ENCODE measurements at regions of chr20 and their contacts with region 1.

Region 1: DNA sequence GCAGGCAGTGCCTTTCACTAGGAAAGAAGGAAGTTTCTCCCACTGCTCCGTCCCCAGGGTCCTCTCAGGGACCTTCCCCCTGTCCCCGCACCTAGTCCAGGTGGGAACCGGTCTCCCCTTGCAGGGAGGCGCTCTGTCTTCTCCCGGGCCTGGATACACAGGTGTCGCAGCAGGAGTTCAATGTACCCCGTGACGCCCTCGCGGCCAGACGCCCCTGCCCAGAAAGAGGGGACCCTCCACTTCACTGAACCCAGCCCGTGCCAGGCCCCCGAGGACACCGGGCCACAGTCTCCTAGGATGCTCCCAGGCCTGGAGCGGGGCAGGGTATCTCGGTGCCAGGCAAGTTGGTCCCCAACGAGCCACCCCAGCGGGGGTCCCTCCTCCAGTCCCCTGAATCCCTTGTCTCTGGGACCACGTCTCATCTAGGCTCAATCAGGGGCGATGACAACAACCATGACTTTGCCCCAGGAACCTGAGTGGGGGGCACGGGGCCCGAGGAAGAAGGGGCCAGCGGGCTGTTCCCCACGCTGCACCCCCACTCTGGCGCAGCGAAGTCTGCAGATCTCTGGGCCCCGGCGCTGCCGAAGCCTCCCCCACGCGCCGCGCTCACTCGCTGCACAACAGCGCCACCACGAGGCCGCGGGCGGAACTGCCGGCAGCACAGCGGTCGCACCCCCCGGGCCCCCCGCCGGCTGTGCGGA is 103.0 kb downstream of the EDN3 start:
- DNase-seq: peak; percentile 89
- ATAC-seq: peak; percentile 72
- H3K4me3 Mint-ChIP-seq: no peak overlapping the region
- H3K27ac Mint-ChIP-seq: peak overlapping the region; percentile 71
- H3K4me1 Mint-ChIP-seq: no peaks in the 10 kb centered on the region
- H3K27me3 Mint-ChIP-seq: peaks cover 2% of the 10 kb centered on the region

Region 2: GRCh38 chr20:58634521-58635278 is 768.7 kb before region 1 on chr20:
- CTCF ChIA-PET with region 1: no interaction called
- POLR2A ChIA-PET with region 1: no interaction called
- intact Hi-C with region 1: no loop called
- DNase-seq: peak; percentile 76
- ATAC-seq: peak; percentile 89
- H3K4me3 Mint-ChIP-seq: peak overlapping the region; percentile 31
- H3K27ac Mint-ChIP-seq: peak overlapping the region; percentile 86
- H3K4me1 Mint-ChIP-seq: peaks cover 17% of the 10 kb centered on the region
- H3K27me3 Mint-ChIP-seq: no peaks in the 10 kb centered on the region

Region 3: DNA sequence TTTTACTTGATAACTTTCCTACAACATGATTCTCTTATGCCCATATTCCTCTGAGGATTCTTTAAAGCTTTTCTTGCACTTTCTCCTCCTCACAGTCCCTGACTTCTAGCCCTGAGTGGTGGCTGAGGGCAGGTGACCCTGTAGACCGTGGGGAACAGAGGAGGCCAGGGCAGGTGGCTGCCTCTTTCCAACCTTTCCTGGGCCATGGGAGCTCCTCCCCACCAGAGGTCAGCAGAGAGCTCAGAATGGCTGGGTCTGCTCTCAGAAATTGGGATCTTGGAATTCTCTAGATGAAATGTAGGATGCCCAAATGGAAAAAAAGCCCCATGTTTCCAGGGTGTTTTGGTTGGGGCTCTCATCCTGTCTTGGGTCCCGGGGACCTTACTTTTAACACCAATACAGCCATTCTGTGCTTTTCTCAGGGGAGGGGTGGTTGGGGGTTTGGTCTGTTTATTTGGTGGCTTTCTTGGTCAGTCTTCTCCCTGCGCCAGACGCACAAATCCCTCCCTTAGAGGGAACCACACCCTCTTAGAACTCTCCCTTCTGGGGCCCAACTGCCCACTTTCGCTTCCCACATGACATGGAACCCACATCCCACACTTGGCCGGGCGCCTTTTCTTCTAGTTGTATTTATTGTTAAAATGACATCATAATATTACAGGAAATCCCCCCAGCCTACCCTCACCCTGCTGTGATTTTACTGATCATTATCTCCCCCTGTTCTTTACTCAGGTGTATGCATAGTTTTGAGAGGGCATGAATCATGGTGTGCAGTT is 533.0 kb before region 1 on chr20:
- CTCF ChIA-PET with region 1: interaction called, 5 read pairs
- POLR2A ChIA-PET with region 1: no interaction called
- intact Hi-C with region 1: loop called (anchors 1 to 5 kb)
- DNase-seq: peak; percentile 73
- ATAC-seq: peak; percentile 75
- H3K4me3 Mint-ChIP-seq: no peak overlapping the region
- H3K27ac Mint-ChIP-seq: peak overlapping the region; percentile 27
- H3K4me1 Mint-ChIP-seq: peaks cover 11% of the 10 kb centered on the region
- H3K27me3 Mint-ChIP-seq: no peaks in the 10 kb centered on the region

Region 4: DNA sequence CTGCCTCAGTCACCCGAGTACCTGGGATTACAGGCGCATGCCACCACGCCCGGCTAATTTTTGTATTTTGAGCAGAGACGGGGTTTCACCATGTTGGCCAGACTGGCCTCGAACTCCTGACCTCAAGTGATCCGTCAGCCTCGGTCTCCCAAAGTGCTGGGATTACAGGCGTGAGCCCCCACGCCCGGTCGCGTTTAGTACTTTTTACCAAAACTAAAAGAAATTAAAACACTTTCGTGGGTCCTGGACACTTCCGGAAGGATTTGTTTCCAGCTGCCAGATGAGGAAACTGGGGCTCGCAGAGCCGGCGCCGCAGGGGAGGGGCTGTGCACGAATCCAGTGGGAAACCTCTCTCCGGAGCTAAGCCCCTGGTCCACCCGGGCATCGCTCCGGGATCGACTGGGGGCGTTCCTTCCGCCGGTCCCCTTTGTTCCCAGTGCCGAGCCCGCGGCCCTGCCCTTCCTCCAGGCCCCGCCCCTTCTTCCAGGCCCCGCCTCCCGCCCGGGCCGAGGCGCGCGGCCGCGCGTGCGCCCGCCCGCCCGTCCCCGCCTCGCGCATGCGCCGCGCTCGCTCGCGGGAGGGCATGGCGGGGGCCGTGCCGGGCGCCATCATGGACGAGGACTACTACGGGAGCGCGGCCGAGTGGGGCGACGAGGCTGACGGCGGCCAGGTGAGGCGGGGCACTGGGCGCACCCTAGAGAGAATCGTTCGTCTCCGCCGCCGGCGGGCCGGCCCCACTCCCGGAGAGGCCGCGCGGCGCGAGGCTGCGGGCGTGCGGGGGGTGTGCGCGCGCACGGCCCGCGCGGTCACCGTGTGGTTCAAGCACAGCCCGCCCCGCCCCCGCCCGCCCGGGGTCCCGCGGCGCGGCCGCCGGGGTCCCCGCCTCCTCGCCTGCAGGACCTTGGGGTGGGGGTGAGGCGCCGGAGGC is 422.4 kb before region 1 on chr20 and contains the start of gene NELFCD:
- CTCF ChIA-PET with region 1: no interaction called
- POLR2A ChIA-PET with region 1: no interaction called
- intact Hi-C with region 1: loop called in 1 of 2 experiments (anchors 2 kb)
- DNase-seq: peak; percentile 94
- ATAC-seq: peak; percentile 87
- H3K4me3 Mint-ChIP-seq: peak within 1 kb of the TSS; percentile 85
- H3K27ac Mint-ChIP-seq: peak within 1 kb of the TSS; percentile 89
- H3K4me1 Mint-ChIP-seq: peaks cover 32% of the 10 kb centered on the region
- H3K27me3 Mint-ChIP-seq: no peaks in the 10 kb centered on the region
- total RNA-seq, gene NELFCD: 111 to 121 TPM

Region 5: DNA sequence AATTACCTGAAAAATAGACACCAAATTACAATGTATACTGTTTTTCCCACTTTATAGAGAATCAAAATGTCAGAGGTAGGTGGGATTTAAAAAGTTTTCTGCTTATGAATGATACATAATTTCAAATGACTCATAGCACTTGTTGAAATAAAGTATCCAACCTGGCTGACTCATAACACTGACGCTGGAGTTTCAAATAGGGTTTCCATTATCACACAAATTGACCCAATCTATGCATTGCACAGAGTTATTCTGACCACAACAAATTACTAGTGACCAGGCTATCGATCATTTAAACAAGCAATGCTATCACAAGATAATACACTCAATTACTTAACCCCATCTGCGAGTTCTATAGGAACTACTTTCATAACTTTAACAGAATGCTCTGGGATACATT is 329.0 kb before region 1 on chr20:
- CTCF ChIA-PET with region 1: no interaction called
- POLR2A ChIA-PET with region 1: no interaction called
- intact Hi-C with region 1: loop called in 1 of 2 experiments (anchors 5 kb)
- DNase-seq: peak; percentile 31
- ATAC-seq: peak; percentile 79
- H3K4me3 Mint-ChIP-seq: no peak overlapping the region
- H3K27ac Mint-ChIP-seq: no peak overlapping the region
- H3K4me1 Mint-ChIP-seq: peaks cover 52% of the 10 kb centered on the region
- H3K27me3 Mint-ChIP-seq: peaks cover 18% of the 10 kb centered on the region

Region 6: GRCh38 chr20:59165891-59166709 is 237.3 kb before region 1 on chr20:
- CTCF ChIA-PET with region 1: no interaction called
- POLR2A ChIA-PET with region 1: no interaction called
- intact Hi-C with region 1: loop called in 1 of 2 experiments (anchors 5 kb)
- DNase-seq: peak; percentile 62
- ATAC-seq: peak; percentile 69
- H3K4me3 Mint-ChIP-seq: peak overlapping the region; percentile 76
- H3K27ac Mint-ChIP-seq: peak overlapping the region; percentile 94
- H3K4me1 Mint-ChIP-seq: peaks cover 89% of the 10 kb centered on the region
- H3K27me3 Mint-ChIP-seq: no peaks in the 10 kb centered on the region

Region 7: DNA sequence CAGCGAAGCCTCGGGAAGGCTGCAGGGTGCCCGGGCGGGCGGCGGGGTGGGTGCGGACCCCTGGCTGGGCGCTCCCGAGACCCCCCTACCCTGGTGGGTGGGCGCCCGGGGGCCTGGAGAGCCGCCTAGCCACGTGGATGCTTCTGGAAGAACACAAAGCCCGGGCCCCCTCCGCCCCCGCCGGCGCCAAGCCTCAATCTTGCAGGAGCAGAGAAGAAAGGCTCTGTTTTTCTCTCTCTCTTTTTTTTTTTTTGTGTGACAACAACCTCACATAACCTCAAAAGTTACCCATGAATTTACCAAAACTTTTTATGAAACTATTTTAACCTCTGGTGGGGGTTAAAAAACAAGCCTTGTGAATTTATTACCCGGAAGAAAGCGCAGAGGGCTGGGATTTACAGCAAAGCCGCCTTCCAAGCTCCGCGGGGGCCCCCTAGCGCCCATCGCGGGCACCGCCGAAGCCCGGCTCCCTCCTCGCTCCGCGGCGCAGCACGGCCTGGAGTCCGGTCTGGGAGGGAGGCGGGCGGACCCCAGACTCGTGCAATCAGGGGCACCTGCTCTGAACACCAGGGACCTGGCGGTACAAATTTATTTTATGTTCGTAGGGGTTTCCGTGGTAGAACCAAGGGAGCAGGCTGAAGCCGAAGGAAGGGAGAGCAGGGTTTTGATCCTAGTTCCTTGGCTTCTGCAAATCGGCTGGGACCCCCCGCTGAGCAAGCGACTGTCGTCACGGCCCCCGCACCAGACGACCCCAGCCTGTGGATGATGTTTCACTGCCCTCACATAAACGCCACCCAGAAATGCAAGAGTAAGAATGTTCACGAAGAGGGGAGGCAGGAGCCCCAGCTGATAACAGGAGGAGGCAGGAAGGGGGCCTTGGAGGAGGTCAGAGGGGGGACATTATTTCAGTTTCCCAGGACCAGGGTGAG is 180.9 kb before region 1 on chr20:
- CTCF ChIA-PET with region 1: interaction called, 3 read pairs
- POLR2A ChIA-PET with region 1: no interaction called
- intact Hi-C with region 1: loop called (anchors 1 kb)
- DNase-seq: peak; percentile 91
- ATAC-seq: peak; percentile 95
- H3K4me3 Mint-ChIP-seq: peak overlapping the region; percentile 65
- H3K27ac Mint-ChIP-seq: peak overlapping the region; percentile 81
- H3K4me1 Mint-ChIP-seq: peaks cover 31% of the 10 kb centered on the region
- H3K27me3 Mint-ChIP-seq: no peaks in the 10 kb centered on the region

Region 8: GRCh38 chr20:59258221-59258621 is 145.2 kb before region 1 on chr20:
- CTCF ChIA-PET with region 1: interaction called, 5 read pairs
- POLR2A ChIA-PET with region 1: no interaction called
- intact Hi-C with region 1: loop called in 1 of 2 experiments (anchors 2 kb)
- DNase-seq: no peak
- ATAC-seq: peak; percentile 72
- H3K4me3 Mint-ChIP-seq: no peak overlapping the region
- H3K27ac Mint-ChIP-seq: peak overlapping the region; percentile 71
- H3K4me1 Mint-ChIP-seq: peaks cover 53% of the 10 kb centered on the region
- H3K27me3 Mint-ChIP-seq: no peaks in the 10 kb centered on the region

Region 9: DNA sequence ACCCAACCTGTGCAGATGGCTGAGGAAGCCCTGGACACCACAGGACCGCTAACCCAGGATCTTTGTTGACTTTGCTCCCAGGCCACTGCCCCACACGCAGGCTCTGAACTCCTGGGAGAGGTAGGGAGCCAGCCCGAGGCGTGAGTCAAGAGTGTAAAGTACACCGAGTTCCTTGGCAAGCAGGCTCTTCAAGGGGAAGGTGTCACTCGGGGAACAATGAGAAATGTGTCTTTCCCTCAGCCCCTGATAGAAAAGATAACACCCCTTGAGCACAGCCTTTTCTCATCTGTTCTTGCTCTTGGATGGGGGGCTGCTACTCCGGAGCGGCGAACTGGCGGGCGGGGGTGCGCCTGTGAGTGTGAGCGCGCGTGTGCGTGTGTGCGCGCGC is 103.5 kb before region 1 on chr20:
- CTCF ChIA-PET with region 1: no interaction called
- POLR2A ChIA-PET with region 1: no interaction called
- intact Hi-C with region 1: no loop called
- DNase-seq: no peak
- ATAC-seq: no peak
- H3K4me3 Mint-ChIP-seq: no peak overlapping the region
- H3K27ac Mint-ChIP-seq: no peak overlapping the region
- H3K4me1 Mint-ChIP-seq: peaks cover 6% of the 10 kb centered on the region
- H3K27me3 Mint-ChIP-seq: peaks cover 40% of the 10 kb centered on the region

Region 10: GRCh38 chr20:60365056-60365666 is 961.8 kb after region 1 on chr20:
- CTCF ChIA-PET with region 1: no interaction called
- POLR2A ChIA-PET with region 1: no interaction called
- intact Hi-C with region 1: no loop called
- DNase-seq: peak; percentile 10
- ATAC-seq: no peak
- H3K4me3 Mint-ChIP-seq: no peak overlapping the region
- H3K27ac Mint-ChIP-seq: no peak overlapping the region
- H3K4me1 Mint-ChIP-seq: no peaks in the 10 kb centered on the region
- H3K27me3 Mint-ChIP-seq: no peaks in the 10 kb centered on the region

Measured in activated CD4-positive, alpha-beta T cell treated with anti-CD3 and anti-CD28 coated beads for 36 hours (primary cell).